ENCODE measurements at regions of chr14 and their contacts with region 1.

Region 1: GRCh38 chr14:63641473-63642228 is at the start of gene WDR89:
- DNase-seq: peak; percentile 97
- ATAC-seq: peak; percentile 94
- H3K4me3 ChIP-seq: peak within 1 kb of the TSS; percentile 89 to 91
- H3K27ac ChIP-seq: peak within 1 kb of the TSS; percentile 99
- H3K4me1 ChIP-seq: peaks cover 12% of the 10 kb centered on the region; the same call in 1 of the 2 replicates
- H3K27me3 ChIP-seq: no peaks in the 10 kb centered on the region
- CTCF ChIP-seq: peak; percentile 78
- total RNA-seq, gene WDR89: 13.0 TPM

Region 2: DNA sequence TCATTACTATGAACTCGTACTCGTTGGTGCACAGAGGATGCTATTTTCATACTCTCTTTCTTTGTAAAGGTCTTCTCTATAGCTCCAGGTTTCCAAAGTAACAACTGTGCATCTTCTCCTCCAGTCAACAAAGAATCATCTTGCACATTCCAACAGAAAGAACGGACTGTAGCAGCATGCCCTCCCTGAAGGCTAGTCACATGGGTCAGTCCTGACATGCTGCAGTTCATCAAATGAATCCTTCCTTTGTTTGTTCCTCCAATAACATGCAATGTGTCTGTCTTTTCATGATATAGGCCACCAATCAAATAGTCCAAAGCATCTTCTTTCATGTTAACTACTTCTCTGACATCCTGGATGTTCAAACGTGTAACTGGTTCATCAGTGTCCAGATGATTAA is 42.8 kb before region 1 on chr14:
- CTCF ChIA-PET with region 1: no interaction called
- POLR2A ChIA-PET with region 1: no interaction called
- in situ Hi-C with region 1: no loop called
- intact Hi-C with region 1: no loop called
- DNase-seq: no peak
- ATAC-seq: no peak
- H3K4me3 ChIP-seq: no peak overlapping the region
- H3K27ac ChIP-seq: no peak overlapping the region
- H3K4me1 ChIP-seq: no peaks in the 10 kb centered on the region
- H3K27me3 ChIP-seq: no peaks in the 10 kb centered on the region
- CTCF ChIP-seq: no peak

Region 3: DNA sequence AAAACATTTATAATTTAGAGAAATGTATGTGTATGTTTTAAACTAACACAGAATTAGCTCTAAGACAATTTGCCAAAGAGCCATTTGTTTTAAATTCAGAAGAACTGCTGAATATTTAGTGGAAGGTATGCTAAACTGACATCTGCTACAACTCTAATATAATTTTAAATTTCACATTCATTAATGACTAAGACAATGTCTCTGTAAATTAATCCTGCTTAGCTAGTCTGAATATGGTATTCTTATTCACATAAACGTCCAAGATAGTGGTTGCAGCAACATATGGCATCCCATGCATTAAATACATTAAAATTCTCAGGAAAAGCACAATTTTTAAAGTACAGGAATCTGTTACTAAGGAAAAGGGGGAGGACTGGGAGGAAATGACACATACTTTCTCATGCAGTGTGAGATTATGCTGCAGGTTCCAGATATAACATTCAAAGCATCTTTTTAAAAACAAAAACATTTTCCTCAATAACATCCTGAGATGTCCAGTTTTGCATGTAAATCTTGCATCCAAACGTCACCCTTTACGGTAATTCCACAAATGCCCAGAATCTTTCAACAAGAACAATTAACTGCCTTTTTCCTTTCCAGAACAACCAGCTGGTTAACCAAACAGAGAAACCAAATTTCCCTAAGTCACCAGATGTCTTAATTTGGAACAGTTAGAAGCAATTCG is 26.8 kb before region 1 on chr14:
- CTCF ChIA-PET with region 1: interaction called, 3 read pairs
- POLR2A ChIA-PET with region 1: interaction called, 14 read pairs
- in situ Hi-C with region 1: no loop called
- intact Hi-C with region 1: no loop called
- DNase-seq: no peak
- ATAC-seq: no peak
- H3K4me3 ChIP-seq: no peak overlapping the region
- H3K27ac ChIP-seq: no peak overlapping the region
- H3K4me1 ChIP-seq: no peaks in the 10 kb centered on the region
- H3K27me3 ChIP-seq: no peaks in the 10 kb centered on the region
- CTCF ChIP-seq: no peak

Region 4: GRCh38 chr14:63760014-63760413 is 118.4 kb after region 1 on chr14:
- CTCF ChIA-PET with region 1: no interaction called
- POLR2A ChIA-PET with region 1: no interaction called
- in situ Hi-C with region 1: no loop called
- intact Hi-C with region 1: loop called (anchors 10 kb)
- DNase-seq: no peak
- ATAC-seq: no peak
- H3K4me3 ChIP-seq: no peak overlapping the region
- H3K27ac ChIP-seq: no peak overlapping the region
- H3K4me1 ChIP-seq: no peaks in the 10 kb centered on the region
- H3K27me3 ChIP-seq: no peaks in the 10 kb centered on the region
- CTCF ChIP-seq: no peak

Region 5: GRCh38 chr14:63833728-63834127 is 192.1 kb after region 1 on chr14:
- CTCF ChIA-PET with region 1: no interaction called
- POLR2A ChIA-PET with region 1: interaction called, 11 read pairs
- in situ Hi-C with region 1: no loop called
- intact Hi-C with region 1: no loop called
- DNase-seq: no peak
- ATAC-seq: no peak
- H3K4me3 ChIP-seq: no peak overlapping the region
- H3K27ac ChIP-seq: no peak overlapping the region
- H3K4me1 ChIP-seq: no peaks in the 10 kb centered on the region
- H3K27me3 ChIP-seq: no peaks in the 10 kb centered on the region
- CTCF ChIP-seq: no peak

Region 6: DNA sequence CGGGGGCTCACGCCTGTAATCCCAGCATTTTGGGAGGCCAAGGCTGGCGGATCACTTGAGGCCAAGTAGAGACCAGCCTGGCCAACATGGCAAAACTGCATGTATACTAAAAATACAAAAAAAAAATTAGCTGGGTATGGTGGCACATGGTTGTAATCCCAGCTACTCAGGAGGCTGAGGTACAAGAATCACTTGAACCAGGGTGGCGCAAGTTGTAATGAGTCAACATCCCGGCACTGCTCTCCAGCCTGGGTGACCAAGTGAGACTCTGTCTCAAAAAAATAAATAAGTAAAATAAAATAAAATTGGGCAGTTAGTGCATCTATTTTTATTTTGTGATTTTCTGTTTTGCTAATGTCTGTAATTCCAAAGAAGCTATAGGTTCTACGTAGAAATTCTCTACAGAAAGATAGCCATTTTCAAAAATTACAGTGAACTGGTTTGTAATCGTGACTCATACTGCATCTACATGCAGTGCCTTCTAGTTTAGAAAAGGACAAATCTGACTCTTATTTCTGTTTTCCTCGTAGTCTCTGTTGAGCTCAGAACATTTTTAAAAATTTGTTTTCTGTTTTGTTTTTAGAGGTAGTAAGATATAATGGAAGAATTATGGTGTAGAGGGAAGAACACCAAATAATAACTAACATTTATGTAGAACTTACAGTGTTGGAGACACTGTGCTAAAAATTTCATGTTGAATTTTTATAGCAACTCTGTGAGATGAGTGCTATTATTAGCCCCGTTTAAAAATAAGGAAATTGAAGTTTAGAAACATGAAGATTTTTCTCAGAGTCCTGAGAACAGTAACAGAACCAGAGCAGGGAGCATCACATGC is 412.3 kb after region 1 on chr14:
- CTCF ChIA-PET with region 1: no interaction called
- POLR2A ChIA-PET with region 1: no interaction called
- in situ Hi-C with region 1: no loop called
- intact Hi-C with region 1: no loop called
- DNase-seq: no peak
- ATAC-seq: no peak
- H3K4me3 ChIP-seq: no peak overlapping the region
- H3K27ac ChIP-seq: no peak overlapping the region
- H3K4me1 ChIP-seq: no peaks in the 10 kb centered on the region
- H3K27me3 ChIP-seq: no peaks in the 10 kb centered on the region
- CTCF ChIP-seq: no peak